ENCODE measurements at regions of chr15 and their contacts with region 1.

Region 1: DNA sequence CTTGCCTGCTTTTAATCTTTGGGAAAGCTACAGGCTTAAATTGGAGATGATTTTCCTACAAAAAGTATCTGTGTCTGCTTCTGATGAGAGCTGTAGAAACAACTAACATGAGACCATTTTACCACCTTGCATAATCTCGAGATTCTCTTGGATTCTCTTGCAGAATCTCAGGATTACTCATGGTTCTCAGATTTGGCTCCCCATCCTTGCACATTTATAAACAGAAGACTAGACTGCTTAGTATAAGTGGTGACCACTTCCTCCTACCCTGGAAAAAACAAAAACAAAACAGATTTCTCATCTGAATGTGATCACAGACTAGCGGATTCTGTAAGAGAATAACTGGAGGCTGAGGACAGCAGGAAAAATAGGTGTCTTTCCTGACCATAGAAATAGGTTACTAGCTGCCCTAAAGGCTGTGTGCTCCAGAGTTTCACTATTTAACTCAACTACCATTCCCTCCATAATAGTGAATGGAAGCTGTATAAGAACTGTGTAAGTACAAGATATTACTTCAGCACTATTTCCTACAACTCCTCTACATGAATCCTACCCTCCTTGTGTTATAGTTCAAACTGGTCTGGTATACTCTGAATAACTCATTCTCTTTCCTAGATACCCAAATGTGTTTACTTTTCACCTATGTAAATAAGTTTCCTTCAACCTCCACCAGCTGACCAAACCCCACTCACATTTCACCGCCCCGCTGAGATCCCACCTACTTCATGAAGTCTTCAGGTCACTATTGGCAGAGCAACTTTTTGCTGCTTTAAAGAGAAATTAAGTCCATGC is 122.2 kb upstream of the C2CD4B start:
- DNase-seq: peak; percentile 18
- ATAC-seq: no peak
- H3K4me3 ChIP-seq: no peak overlapping the region
- H3K27ac ChIP-seq: no peak overlapping the region
- H3K4me1 ChIP-seq: no peaks in the 10 kb centered on the region
- H3K27me3 ChIP-seq: peaks cover 11% of the 10 kb centered on the region
- CTCF ChIP-seq: no peak
- POLR2A ChIP-seq: no peak
- RAD21 ChIP-seq: no peak

Region 2: DNA sequence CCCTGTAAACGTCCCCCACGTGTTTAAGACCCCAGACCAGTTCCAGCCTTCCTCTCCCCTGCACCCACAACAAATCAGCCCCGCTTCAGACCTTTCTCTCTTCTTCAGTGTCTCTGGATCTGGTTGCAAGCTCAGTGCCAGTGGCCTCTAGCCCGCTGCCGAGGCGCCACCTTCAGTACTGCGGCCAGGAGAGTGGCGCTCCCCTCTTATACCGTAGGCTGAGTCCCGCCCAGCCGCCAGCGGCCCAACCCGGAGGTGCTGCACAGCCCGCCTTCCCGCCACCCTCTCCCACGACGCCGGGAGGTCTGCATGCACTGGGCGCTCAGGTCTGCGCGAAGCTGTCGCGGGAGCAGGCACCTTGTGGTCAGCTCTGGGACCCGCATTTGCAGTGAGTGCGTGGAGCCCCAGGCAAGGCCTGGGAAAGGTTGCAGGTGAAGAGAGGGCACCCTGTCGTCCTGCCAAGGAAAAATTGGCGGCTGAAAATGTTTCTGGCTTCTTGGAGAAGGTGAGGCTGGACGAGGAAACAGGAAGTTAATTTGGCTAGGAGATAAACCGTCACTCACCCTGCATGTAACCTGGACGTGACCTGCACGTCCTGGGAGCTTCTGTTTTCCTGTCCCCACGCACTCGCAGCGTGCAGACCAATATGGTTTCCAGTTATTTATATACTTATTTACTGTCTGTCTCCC is 122.0 kb before region 1 on chr15 and contains the start of gene C2CD4B:
- CTCF ChIA-PET with region 1: no interaction called
- POLR2A ChIA-PET with region 1: no interaction called
- dilution Hi-C with region 1: no loop called
- in situ Hi-C with region 1: no loop called
- intact Hi-C with region 1: loop called (anchors 10 kb)
- DNase-seq: no peak
- ATAC-seq: 0 out of 2 replicates have a peak, but pooled peaks have one; percentile 21
- H3K4me3 ChIP-seq: no peak within 1 kb of the TSS
- H3K27ac ChIP-seq: no peak within 1 kb of the TSS
- H3K4me1 ChIP-seq: no peaks in the 10 kb centered on the region
- H3K27me3 ChIP-seq: peaks cover 55% of the 10 kb centered on the region
- CTCF ChIP-seq: no peak
- POLR2A ChIP-seq: no peak
- RAD21 ChIP-seq: no peak
- total RNA-seq, gene C2CD4B: not detected in 2 replicates

Region 3: GRCh38 chr15:62362608-62363007 is 75.3 kb after region 1 on chr15:
- CTCF ChIA-PET with region 1: no interaction called
- POLR2A ChIA-PET with region 1: no interaction called
- dilution Hi-C with region 1: no loop called
- in situ Hi-C with region 1: no loop called
- intact Hi-C with region 1: no loop called
- DNase-seq: peak; percentile 51
- ATAC-seq: peak; percentile 59
- H3K4me3 ChIP-seq: no peak overlapping the region
- H3K27ac ChIP-seq: no peak overlapping the region
- H3K4me1 ChIP-seq: no peaks in the 10 kb centered on the region
- H3K27me3 ChIP-seq: peaks cover 25% of the 10 kb centered on the region
- CTCF ChIP-seq: no peak
- POLR2A ChIP-seq: no peak
- RAD21 ChIP-seq: no peak